ENCODE measurements at regions of chr5 and their contacts with region 1.

Region 1: DNA sequence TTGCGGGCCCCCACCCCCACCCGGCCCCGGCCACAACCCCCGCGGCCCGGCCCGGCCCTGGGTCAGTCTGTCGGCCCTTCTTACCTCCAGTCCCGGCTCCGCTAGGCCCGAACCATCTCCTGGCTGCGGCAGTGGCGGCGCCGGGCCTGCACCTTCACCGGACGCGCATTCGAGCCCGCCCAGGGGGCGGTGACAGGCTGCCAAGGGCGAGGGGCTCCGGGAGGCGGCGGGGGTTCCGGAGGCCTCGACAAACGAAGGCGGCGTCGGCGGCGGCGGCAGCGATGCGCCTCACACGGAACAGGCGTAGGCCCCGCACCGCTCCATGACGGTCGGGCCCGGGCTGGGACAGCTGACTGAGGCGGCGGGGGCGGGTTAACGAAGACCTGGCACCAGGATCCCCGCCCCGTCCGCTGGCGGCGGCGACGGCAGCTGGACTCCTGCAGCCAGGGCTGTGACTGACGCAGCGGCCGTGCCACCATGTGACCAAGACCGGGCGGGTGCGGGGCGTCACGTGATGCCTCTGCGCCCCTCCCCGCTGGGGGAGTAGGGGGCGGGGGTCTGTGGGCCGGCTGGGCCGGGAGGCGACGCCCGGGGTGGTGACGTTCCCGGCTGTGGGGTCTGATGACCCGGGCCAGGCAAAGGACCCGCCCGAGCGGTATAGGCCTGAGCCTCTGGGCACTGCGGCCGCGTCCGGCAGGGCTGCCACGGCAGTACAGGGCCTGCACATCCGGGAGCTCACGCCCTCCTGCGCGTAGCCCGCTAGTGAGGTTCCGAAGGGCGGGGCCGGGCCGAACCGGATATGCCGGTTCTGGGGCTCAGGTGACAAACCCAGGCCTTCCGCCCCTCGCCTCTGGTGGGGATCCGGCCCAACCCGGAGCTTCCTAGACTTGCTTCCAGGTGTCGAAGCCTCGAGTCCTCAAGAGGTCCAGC is at the start of gene AFF4:
- DNase-seq: peak; percentile 94
- ATAC-seq: peak; percentile 86
- H3K4me3 Mint-ChIP-seq: peak within 1 kb of the TSS; percentile 94
- H3K27ac Mint-ChIP-seq: peak within 1 kb of the TSS; percentile 94
- H3K4me1 Mint-ChIP-seq: peaks cover 37% of the 10 kb centered on the region
- H3K27me3 Mint-ChIP-seq: no peaks in the 10 kb centered on the region
- CTCF ChIP-seq: no peak
- total RNA-seq, gene AFF4: 42.7 and 51.8 TPM in 2 replicates

Region 2: DNA sequence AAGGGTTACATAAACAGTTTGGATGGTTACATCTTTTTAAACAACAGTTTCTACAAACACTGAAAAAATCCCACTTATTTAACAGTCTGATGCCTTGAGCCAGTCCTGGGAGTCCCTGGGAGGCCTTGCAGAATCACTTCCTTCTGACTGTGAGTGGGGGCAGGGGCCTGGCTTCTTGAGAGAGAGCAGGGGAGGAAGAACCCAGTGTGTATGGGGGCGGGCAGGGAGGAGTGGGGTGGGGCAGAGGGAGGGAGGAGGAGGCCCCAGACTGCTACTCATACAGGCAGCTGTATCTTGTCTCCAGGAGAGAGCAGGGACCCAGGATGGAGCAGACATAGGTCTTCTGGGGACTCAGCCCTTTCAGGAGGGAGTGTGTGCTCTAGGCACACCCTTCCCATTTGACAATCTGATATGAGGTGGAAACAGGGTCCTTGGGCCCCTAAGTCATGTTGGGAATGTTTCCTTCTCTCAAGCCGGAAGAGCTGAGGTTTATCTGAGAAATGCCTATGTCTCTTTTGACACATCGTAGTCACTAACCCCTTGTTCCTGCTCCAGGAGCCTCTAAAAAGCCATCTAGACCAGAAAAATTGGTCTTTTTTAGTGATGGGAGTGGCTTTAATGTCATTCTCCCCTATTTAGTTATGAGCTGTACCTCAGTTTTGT is 525.7 kb before region 1 on chr5:
- CTCF ChIA-PET with region 1: no interaction called
- POLR2A ChIA-PET with region 1: no interaction called
- intact Hi-C with region 1: no loop called
- DNase-seq: no peak
- ATAC-seq: peak; percentile 96
- H3K4me3 Mint-ChIP-seq: peak overlapping the region; percentile 48
- H3K27ac Mint-ChIP-seq: peak overlapping the region; percentile 74
- H3K4me1 Mint-ChIP-seq: peaks cover 60% of the 10 kb centered on the region
- H3K27me3 Mint-ChIP-seq: no peaks in the 10 kb centered on the region
- CTCF ChIP-seq: no peak

Region 3: DNA sequence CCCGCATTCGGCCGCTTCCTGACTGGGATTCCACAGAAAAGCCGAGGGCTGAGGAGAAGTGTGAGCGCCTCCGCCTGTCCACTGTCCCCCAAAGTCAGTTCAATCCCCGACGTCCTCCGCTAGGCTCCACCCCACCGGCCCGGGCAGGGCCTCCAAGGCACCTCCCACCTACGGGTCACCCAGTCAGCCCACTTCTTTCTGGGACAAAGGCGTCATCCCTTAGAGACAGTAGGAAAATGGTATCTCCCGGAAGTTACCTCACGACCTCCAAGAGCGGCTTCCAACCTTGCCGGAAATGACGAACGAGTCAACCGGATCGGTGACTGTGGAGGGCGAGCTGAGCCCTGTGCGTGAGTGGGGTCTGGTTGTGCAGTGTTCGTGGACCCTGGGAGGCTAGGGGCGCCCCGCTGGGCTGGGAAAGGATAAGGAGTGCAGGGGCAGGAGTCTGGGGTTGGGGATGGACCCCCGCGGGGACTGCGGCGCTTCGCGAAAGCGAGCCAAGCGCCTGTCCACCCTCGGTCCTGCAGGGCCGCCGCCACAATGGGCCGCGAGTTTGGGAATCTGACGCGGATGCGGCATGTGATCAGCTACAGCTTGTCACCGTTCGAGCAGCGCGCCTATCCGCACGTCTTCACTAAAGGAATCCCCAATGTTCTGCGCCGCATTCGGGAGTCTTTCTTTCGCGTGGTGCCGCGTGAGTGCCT is 96.9 kb before region 1 on chr5 and contains the starts of genes GDF9 and UQCRQ:
- CTCF ChIA-PET with region 1: no interaction called
- POLR2A ChIA-PET with region 1: interaction called, 5 read pairs
- intact Hi-C with region 1: loop called (anchors 1 kb)
- DNase-seq: peak; percentile 77
- ATAC-seq: peak; percentile 98
- H3K4me3 Mint-ChIP-seq: peak within 1 kb of the TSS; percentile 99
- H3K27ac Mint-ChIP-seq: peak within 1 kb of the TSS; percentile 98
- H3K4me1 Mint-ChIP-seq: peaks cover 25% of the 10 kb centered on the region
- H3K27me3 Mint-ChIP-seq: no peaks in the 10 kb centered on the region
- CTCF ChIP-seq: no peak
- total RNA-seq, gene GDF9: 0.29 and 0.39 TPM in 2 replicates
- total RNA-seq, gene UQCRQ: 197 and 218 TPM in 2 replicates

Region 4: DNA sequence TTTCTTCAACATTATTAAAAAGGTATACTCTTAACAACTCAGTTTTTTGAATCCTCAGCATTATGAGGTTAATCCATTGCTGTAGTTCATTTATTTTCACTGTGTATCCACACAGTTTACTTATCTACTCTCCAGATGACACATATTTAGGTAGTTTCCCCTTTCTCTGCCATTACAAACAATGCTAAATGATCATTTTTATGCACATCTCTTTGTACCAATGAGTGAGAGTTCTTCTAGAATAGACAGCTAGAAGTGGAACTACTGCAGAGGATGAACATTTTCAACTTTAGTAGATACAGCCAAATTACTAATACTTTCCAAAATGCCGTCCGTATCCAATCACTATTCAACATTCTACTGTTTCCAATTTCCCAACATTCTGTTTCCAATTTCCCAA is 11.5 kb before region 1 on chr5:
- CTCF ChIA-PET with region 1: no interaction called
- POLR2A ChIA-PET with region 1: no interaction called
- intact Hi-C with region 1: no loop called
- DNase-seq: no peak
- ATAC-seq: no peak
- H3K4me3 Mint-ChIP-seq: no peak overlapping the region
- H3K27ac Mint-ChIP-seq: no peak overlapping the region
- H3K4me1 Mint-ChIP-seq: peaks cover 51% of the 10 kb centered on the region
- H3K27me3 Mint-ChIP-seq: no peaks in the 10 kb centered on the region
- CTCF ChIP-seq: no peak

Region 5: DNA sequence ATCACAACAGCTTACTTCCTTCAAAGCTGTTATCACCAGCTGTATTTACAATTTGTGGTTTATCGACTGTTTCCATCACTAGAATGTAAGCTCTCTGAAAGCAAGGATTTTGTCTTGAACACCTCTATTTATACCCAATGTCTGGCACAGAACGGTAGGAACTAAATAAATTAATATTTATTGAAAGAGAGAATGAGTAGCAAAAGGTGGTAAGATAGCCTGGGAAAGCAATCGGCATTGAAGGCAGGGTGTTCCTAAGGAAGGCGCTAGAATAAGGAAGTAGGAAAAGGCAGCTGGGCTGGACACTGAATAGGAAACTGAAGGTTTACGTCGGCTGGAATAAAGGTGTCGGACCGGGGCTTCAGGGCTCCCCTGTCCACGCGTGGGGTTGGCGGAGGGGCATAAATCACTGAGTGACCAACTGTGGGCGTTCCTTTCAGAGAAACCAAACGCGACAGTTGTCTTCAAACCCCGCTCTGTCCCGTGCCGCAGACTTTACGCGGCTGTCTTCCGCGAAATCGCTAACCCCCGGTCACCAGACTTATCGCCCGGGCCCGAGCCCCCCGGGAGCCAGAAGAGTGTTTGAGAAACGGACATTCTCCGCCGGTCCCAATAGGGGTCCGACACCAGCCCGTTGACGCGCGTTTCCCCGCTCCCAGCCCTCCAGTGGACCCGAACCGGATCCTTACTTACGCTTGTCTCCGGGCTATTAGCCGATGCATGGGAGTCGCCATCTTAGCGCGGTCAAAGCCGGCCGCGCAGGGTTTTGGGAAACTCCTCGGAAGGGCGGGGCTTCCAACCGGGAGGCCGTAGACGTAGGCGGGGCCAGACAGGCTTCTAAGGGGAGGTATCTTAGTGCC is 62.6 kb after region 1 on chr5 and contains the start of gene ZCCHC10:
- CTCF ChIA-PET with region 1: no interaction called
- POLR2A ChIA-PET with region 1: interaction called, 21 read pairs
- intact Hi-C with region 1: loop called (anchors 1 kb)
- DNase-seq: peak; percentile 86
- ATAC-seq: peak; percentile 98
- H3K4me3 Mint-ChIP-seq: peak within 1 kb of the TSS; percentile 95
- H3K27ac Mint-ChIP-seq: peak within 1 kb of the TSS; percentile 94
- H3K4me1 Mint-ChIP-seq: peaks cover 41% of the 10 kb centered on the region
- H3K27me3 Mint-ChIP-seq: no peaks in the 10 kb centered on the region
- CTCF ChIP-seq: no peak
- total RNA-seq, gene ZCCHC10: 31.4 and 32.6 TPM in 2 replicates

Region 6: GRCh38 chr5:133051580-133052332 is 88.3 kb after region 1 on chr5 and contains the start of gene HSPA4:
- CTCF ChIA-PET with region 1: interaction called, 3 read pairs
- POLR2A ChIA-PET with region 1: interaction called, 95 read pairs
- intact Hi-C with region 1: loop called (anchors 1 kb)
- DNase-seq: peak; percentile 93
- ATAC-seq: peak; percentile 85
- H3K4me3 Mint-ChIP-seq: peak within 1 kb of the TSS; percentile 96
- H3K27ac Mint-ChIP-seq: peak within 1 kb of the TSS; percentile 99
- H3K4me1 Mint-ChIP-seq: peaks cover 64% of the 10 kb centered on the region
- H3K27me3 Mint-ChIP-seq: no peaks in the 10 kb centered on the region
- CTCF ChIP-seq: no peak
- total RNA-seq, gene HSPA4: 152 and 162 TPM in 2 replicates

Region 7: DNA sequence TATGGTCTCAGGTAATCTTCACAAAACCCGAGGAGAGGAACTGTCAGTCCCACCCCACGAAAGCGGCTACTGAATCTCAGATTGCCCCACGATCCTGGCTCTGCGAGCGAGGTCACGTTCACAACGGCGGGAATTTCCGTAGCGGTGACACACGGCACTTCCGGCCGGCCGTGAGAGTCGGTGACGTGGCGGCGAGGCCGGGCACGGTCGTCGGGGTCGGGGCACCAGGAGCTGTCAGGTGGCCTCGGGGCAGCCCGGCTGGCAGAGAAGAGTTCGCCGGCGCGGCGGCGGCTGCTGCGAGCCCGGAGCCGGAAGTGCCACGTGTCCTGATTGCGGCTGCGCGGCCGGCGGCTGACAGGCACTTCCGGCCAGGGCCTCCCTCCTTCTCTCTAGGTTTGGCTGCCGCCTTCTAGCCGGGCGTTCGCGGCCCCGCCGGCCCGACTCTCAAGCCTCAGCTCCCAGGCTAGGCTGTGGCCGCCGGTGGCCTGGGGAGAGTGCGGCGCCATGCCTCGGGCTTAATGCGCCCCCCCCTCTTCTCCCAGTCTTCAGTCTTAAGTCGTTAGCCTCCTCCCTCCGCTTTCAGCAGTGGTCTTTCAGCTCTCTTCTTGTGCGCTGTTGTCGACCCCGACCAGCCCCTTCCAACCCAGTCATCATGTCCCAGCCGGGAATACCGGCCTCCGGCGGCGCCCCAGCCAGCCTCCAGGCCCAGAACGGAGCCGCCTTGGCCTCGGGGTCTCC is 1685.2 kb after region 1 on chr5 and contains the start of gene SEC24A:
- CTCF ChIA-PET with region 1: no interaction called
- POLR2A ChIA-PET with region 1: no interaction called
- intact Hi-C with region 1: loop called (anchors 5 kb)
- DNase-seq: peak; percentile 86
- ATAC-seq: peak; percentile 77
- H3K4me3 Mint-ChIP-seq: peak within 1 kb of the TSS; percentile 91
- H3K27ac Mint-ChIP-seq: peak within 1 kb of the TSS; percentile 96
- H3K4me1 Mint-ChIP-seq: peaks cover 22% of the 10 kb centered on the region
- H3K27me3 Mint-ChIP-seq: no peaks in the 10 kb centered on the region
- CTCF ChIP-seq: no peak
- total RNA-seq, gene SEC24A: 13.8 and 15.6 TPM in 2 replicates